ENCODE measurements at regions of chr12 and their contacts with region 1.

Region 1: GRCh38 chr12:14185427-14186192 is 179.9 kb upstream of the ATF7IP start:
- DNase-seq: peak; percentile 70
- H3K4me3 Mint-ChIP-seq: no peak overlapping the region
- H3K27ac Mint-ChIP-seq: no peak overlapping the region
- H3K4me1 Mint-ChIP-seq: no peaks in the 10 kb centered on the region
- H3K27me3 Mint-ChIP-seq: peaks cover 20% of the 10 kb centered on the region

Region 2: DNA sequence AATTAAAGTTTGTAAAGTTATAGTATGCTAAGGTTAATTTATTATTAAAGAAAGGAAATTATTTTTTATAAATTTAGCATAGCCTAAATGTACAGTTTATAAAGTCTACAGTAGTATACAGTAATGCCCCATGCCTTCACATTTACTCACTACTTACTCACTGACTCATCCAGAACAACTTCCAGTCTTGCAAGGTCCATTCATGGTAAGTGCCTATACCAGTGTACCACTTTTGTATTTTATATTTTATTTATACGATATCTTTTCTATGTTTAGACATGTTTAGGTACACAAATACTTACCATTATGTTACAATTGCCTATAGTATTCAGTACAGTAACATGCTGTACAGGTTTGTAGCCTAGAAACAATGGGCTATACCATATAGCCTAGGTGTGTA is 109.1 kb before region 1 on chr12:
- intact Hi-C with region 1: no loop called
- DNase-seq: no peak
- H3K4me3 Mint-ChIP-seq: no peak overlapping the region
- H3K27ac Mint-ChIP-seq: no peak overlapping the region
- H3K4me1 Mint-ChIP-seq: no peaks in the 10 kb centered on the region
- H3K27me3 Mint-ChIP-seq: no peaks in the 10 kb centered on the region

Region 3: GRCh38 chr12:14605401-14605989 is 419.9 kb after region 1 on chr12:
- intact Hi-C with region 1: no loop called
- DNase-seq: no peak
- H3K4me3 Mint-ChIP-seq: no peak overlapping the region
- H3K27ac Mint-ChIP-seq: no peak overlapping the region
- H3K4me1 Mint-ChIP-seq: no peaks in the 10 kb centered on the region
- H3K27me3 Mint-ChIP-seq: peaks cover 5% of the 10 kb centered on the region

Region 4: GRCh38 chr12:14664510-14664909 is 478.9 kb after region 1 on chr12:
- intact Hi-C with region 1: loop called (anchors 1 kb)
- DNase-seq: peak; percentile 81
- H3K4me3 Mint-ChIP-seq: no peak overlapping the region
- H3K27ac Mint-ChIP-seq: no peak overlapping the region
- H3K4me1 Mint-ChIP-seq: peaks cover 6% of the 10 kb centered on the region
- H3K27me3 Mint-ChIP-seq: peaks cover 12% of the 10 kb centered on the region